ENCODE measurements at regions of chr12 and their contacts with region 1.

Region 1: GRCh38 chr12:124767066-124767821 is 96.4 kb downstream of the SCARB1 start:
- DNase-seq: peak; percentile 83 to 87
- ATAC-seq: peak; percentile 78 to 87 (median 78)
- H3K4me3 ChIP-seq: no peak overlapping the region
- H3K4me3 Mint-ChIP-seq: peak overlapping the region; percentile 60
- H3K27ac ChIP-seq: no peak overlapping the region
- H3K27ac Mint-ChIP-seq: peak overlapping the region; percentile 64 to 80
- H3K4me1 ChIP-seq: peaks cover 42% of the 10 kb centered on the region
- H3K4me1 Mint-ChIP-seq: peaks cover 21% of the 10 kb centered on the region in 2 donors
- H3K27me3 ChIP-seq: peaks cover 16% of the 10 kb centered on the region
- H3K27me3 Mint-ChIP-seq: peaks cover 27 to 35% of the 10 kb centered on the region in 2 donors
- CTCF ChIP-seq: peak; percentile 98

Region 2: GRCh38 chr12:124036674-124037109 is 730.6 kb before region 1 on chr12:
- intact Hi-C with region 1: loop called (anchors 1 kb)
- DNase-seq: peak; percentile 26 to 77
- ATAC-seq: peak; percentile 58 to 70 (median 61)
- H3K4me3 ChIP-seq: no peak overlapping the region
- H3K4me3 Mint-ChIP-seq: no peak overlapping the region
- H3K27ac ChIP-seq: no peak overlapping the region
- H3K27ac Mint-ChIP-seq: no peak overlapping the region
- H3K4me1 ChIP-seq: no peaks in the 10 kb centered on the region
- H3K4me1 Mint-ChIP-seq: peaks cover 5 to 7% of the 10 kb centered on the region in 2 donors
- H3K27me3 ChIP-seq: no peaks in the 10 kb centered on the region
- H3K27me3 Mint-ChIP-seq: peaks cover 14 to 43% of the 10 kb centered on the region in 2 donors
- CTCF ChIP-seq: peak; percentile 93

Region 3: DNA sequence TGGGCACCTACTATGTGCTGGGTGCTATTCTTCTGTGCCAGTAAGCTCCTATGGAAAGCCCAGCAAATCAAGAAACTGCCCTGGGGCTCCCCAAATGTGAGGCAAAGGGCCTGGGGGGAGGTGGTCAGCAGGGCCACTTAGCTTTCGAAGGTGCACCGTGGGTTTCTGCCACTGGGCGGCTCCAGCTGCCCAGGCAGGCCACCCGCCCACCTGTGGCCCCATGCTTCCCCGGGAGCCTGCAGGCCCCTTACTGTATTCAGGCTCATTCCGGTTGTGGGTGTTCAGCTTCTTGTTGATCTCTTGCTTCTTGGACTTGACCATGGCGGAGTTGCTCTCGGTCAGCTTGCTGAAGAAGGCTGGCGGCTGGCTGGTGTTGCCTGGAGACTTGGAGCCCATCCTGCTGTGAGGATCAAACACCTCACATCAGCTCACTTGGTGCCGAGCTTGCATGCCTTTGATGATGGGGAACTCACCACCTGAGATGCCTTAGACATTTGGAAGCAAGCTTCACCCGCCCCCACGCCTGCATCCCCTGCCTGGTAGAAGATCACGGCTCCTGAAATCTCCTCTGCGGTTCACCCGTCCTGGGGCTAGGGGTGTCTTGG is 435.1 kb before region 1 on chr12:
- intact Hi-C with region 1: loop called (anchors 5 kb)
- DNase-seq: no peak
- ATAC-seq: no peak
- H3K4me3 ChIP-seq: no peak overlapping the region
- H3K4me3 Mint-ChIP-seq: no peak overlapping the region
- H3K27ac ChIP-seq: no peak overlapping the region
- H3K27ac Mint-ChIP-seq: no peak overlapping the region
- H3K4me1 ChIP-seq: no peaks in the 10 kb centered on the region
- H3K4me1 Mint-ChIP-seq: no peaks in the 10 kb centered on the region
- H3K27me3 ChIP-seq: no peaks in the 10 kb centered on the region
- H3K27me3 Mint-ChIP-seq: no peaks in the 10 kb centered on the region
- CTCF ChIP-seq: no peak

Region 4: DNA sequence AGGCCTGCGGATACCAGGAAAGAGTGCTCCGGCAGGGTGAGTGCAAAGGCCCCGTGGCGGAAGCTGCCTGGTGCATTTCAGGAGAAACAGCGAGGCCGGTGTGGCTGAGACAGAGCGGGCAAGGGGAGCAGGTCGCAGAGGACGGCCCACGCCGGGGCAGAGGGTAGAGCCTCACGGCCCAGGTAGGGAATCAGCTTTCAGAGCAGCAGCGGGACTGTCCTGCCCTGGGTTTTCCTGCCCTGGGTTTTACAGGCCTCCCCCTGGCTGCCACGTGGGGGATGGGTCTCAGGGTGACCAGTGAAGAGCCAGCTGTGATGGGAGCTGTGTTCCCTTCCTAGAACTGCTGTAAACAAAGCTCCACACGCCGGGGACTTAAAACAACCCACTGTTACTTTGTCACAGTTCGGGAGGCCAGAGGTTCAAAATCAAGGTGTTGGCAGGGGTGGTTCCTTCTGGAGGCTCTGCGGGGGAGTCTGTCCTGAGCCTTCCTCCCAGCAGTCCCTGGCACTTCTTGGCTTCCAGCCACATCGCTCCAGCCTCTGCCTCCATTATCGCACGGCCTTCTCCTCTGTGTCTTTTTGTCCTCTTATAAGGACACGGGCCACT is 210.2 kb before region 1 on chr12:
- intact Hi-C with region 1: no loop called
- DNase-seq: no peak
- ATAC-seq: no peak
- H3K4me3 ChIP-seq: no peak overlapping the region
- H3K4me3 Mint-ChIP-seq: no peak overlapping the region
- H3K27ac ChIP-seq: no peak overlapping the region
- H3K27ac Mint-ChIP-seq: no peak overlapping the region
- H3K4me1 ChIP-seq: peaks cover 24% of the 10 kb centered on the region
- H3K4me1 Mint-ChIP-seq: peaks cover 23 to 50% of the 10 kb centered on the region in 2 donors
- H3K27me3 ChIP-seq: no peaks in the 10 kb centered on the region
- H3K27me3 Mint-ChIP-seq: no peaks in the 10 kb centered on the region
- CTCF ChIP-seq: no peak

Region 5: DNA sequence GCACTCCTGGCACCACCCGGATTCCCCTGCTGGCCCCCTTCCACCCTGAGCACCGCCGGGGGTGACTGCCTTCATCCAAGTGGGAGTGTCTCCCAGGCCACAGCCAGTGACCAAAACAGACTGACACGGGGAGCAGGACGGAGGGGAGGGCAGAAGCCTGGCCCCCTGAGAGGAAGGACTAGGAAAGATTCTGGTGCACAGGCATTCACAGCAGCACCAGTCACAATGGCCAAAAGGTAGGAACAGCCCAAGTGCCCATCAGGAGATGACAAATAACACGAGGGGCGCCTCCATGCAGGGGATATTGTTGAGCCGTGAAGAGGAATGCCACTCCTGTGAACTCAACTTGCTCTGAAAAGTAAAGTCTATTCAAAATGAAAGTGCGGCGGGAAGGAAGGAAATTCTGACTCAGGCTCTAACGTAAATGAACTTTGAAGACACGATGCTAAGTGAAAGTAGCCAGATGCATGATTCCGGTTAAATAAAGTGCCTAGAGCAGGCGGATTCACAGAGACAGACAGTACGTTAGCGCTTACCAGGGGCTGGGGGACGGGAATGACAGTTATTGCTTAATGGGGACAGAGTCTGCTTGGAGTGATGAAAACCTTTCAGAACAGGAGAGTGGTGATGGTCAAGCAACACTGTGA is 53.7 kb before region 1 on chr12:
- intact Hi-C with region 1: no loop called
- DNase-seq: peak; percentile 35 to 81
- ATAC-seq: peak; percentile 71 to 89 (median 85)
- H3K4me3 ChIP-seq: peak overlapping the region; percentile 14
- H3K4me3 Mint-ChIP-seq: peak overlapping the region; percentile 67
- H3K27ac ChIP-seq: peak overlapping the region; percentile 73
- H3K27ac Mint-ChIP-seq: peak overlapping the region; percentile 37 to 90
- H3K4me1 ChIP-seq: peaks cover 21% of the 10 kb centered on the region
- H3K4me1 Mint-ChIP-seq: peaks cover 13 to 14% of the 10 kb centered on the region in 2 donors
- H3K27me3 ChIP-seq: no peaks in the 10 kb centered on the region
- H3K27me3 Mint-ChIP-seq: no peaks in the 10 kb centered on the region
- CTCF ChIP-seq: no peak

Region 6: DNA sequence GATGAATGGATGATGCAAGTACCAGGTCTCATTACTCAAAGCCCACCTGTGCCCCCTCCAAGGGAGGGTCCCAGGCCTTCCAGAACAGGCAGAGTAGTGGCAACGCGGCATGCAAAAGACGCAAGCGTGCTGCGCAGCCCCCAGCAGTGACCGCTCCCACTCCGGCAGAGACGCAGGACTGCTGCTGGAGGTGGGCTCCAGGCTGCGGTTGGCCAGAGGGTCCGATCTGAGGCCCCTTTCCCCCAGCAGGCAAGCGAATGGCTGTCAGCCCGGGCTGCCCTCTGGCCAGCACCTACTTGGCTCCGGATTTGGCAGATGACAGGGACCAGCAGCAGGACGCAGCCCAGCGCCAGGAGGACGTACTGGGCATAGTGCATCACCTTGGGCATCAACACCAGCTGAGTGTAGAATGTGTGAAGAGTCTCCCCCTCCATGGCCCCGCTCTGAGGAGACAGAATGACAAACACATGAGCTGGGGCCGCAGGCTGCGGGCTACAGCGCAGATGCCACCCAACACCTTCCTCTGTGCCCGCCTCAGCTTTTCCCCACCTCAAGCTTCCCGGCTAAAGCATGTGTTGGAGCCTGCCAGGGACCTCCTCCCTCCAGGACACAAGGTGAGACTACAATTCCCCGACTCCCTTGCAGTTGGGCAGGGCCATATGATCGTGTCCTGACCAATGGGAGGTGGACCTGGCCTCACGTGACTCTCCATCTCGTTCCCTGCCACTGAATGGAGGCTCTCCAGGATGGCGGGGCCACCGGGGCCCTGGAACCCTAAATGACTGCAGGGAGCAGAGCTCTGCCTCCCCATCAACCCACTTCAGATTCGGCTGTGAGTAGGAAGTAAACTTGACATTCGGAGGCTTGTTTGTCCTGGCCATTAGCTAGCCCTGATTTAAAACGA is 19.1 kb after region 1 on chr12:
- intact Hi-C with region 1: no loop called
- DNase-seq: no peak
- ATAC-seq: no peak
- H3K4me3 ChIP-seq: no peak overlapping the region
- H3K4me3 Mint-ChIP-seq: no peak overlapping the region
- H3K27ac ChIP-seq: no peak overlapping the region
- H3K27ac Mint-ChIP-seq: no peak overlapping the region
- H3K4me1 ChIP-seq: no peaks in the 10 kb centered on the region
- H3K4me1 Mint-ChIP-seq: no peaks in the 10 kb centered on the region
- H3K27me3 ChIP-seq: no peaks in the 10 kb centered on the region
- H3K27me3 Mint-ChIP-seq: no peaks in the 10 kb centered on the region
- CTCF ChIP-seq: no peak